Pancreas (tissue), 10 donors: ENCODE measurements at regions of chr7 and their contacts with region 1.

Region 1: GRCh38 chr7:50610521-50611277 is 45.5 kb upstream of the DDC start:
- DNase-seq: no peak
- ATAC-seq: no peak
- H3K4me3 ChIP-seq: no peak overlapping the region
- H3K27ac ChIP-seq: no peak overlapping the region
- H3K4me1 ChIP-seq: peaks cover 5 to 16% (median 13%) of the 10 kb centered on the region in 3 donors
- H3K27me3 ChIP-seq: no peaks in the 10 kb centered on the region
- CTCF ChIP-seq: no peak

Region 2: GRCh38 chr7:50436133-50436806 is 174.4 kb before region 1 on chr7:
- intact Hi-C with region 1: no loop called
- DNase-seq: no peak
- ATAC-seq: peak in 1 of 4 donors; percentile 23
- H3K4me3 ChIP-seq: no peak overlapping the region
- H3K27ac ChIP-seq: no peak overlapping the region
- H3K4me1 ChIP-seq: no peaks in the 10 kb centered on the region
- H3K27me3 ChIP-seq: no peaks in the 10 kb centered on the region
- CTCF ChIP-seq: no peak

Region 3: GRCh38 chr7:50826371-50827172 is 215.9 kb after region 1 on chr7:
- intact Hi-C with region 1: no loop called
- DNase-seq: no peak
- ATAC-seq: peak in 2 of 4 donors; percentile 29 to 48
- H3K4me3 ChIP-seq: no peak overlapping the region
- H3K27ac ChIP-seq: no peak overlapping the region
- H3K4me1 ChIP-seq: peaks cover 5 to 14% (median 8%) of the 10 kb centered on the region in 3 donors
- H3K27me3 ChIP-seq: no peaks in the 10 kb centered on the region
- CTCF ChIP-seq: no peak

Region 4: GRCh38 chr7:51154201-51154600 is 543.5 kb after region 1 on chr7:
- intact Hi-C with region 1: loop called in 1 of 3 experiments (anchors 10 kb)
- DNase-seq: no peak
- ATAC-seq: no peak
- H3K4me3 ChIP-seq: no peak overlapping the region
- H3K27ac ChIP-seq: no peak overlapping the region
- H3K4me1 ChIP-seq: no peaks in the 10 kb centered on the region
- H3K27me3 ChIP-seq: no peaks in the 10 kb centered on the region
- CTCF ChIP-seq: no peak